IMR-90 (cell line): ENCODE measurements at regions of chr7 and their contacts with region 1.

Region 1: DNA sequence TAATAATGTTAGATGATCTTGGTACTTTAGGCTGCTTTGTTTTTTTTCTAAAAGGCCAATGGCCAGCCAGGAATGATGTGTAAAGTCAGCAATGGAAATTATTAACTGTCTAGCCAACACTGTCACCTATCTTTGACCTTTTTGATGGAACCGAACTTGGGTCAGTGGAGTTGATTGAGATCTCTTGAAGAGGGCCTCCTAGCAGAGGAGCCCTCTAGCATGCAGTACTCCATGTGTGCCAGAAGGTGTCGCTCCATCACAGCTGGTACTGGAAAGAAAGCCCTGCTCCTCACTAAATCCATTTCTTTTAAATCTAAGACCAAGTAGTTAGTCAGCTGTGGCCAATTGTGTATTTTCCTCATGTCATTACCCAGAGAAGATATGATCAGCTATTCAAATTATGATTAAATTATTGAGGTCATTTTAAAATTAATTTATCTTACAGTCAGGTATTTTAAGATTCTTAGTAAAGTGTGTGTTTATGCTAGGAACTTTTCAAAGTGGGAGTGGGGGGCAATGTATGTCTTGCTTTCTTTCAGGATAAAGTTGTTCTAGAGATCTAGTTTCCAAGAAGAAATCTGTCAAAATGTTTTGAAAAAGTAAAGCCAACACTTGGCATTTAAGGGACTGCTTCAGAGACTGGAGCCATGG is 33.1 kb upstream of the CROT start:
- DNase-seq: peak; percentile 71
- ATAC-seq: peak; percentile 85
- H3K4me3 ChIP-seq: no peak overlapping the region
- H3K27ac ChIP-seq: no peak overlapping the region
- H3K4me1 ChIP-seq: peaks cover 7% of the 10 kb centered on the region
- H3K27me3 ChIP-seq: no peaks in the 10 kb centered on the region
- CTCF ChIP-seq: peak; percentile 99
- POLR2A ChIP-seq: peak; percentile 30; the same call in 1 of the 2 replicates
- RAD21 ChIP-seq: peak; percentile 100

Region 2: DNA sequence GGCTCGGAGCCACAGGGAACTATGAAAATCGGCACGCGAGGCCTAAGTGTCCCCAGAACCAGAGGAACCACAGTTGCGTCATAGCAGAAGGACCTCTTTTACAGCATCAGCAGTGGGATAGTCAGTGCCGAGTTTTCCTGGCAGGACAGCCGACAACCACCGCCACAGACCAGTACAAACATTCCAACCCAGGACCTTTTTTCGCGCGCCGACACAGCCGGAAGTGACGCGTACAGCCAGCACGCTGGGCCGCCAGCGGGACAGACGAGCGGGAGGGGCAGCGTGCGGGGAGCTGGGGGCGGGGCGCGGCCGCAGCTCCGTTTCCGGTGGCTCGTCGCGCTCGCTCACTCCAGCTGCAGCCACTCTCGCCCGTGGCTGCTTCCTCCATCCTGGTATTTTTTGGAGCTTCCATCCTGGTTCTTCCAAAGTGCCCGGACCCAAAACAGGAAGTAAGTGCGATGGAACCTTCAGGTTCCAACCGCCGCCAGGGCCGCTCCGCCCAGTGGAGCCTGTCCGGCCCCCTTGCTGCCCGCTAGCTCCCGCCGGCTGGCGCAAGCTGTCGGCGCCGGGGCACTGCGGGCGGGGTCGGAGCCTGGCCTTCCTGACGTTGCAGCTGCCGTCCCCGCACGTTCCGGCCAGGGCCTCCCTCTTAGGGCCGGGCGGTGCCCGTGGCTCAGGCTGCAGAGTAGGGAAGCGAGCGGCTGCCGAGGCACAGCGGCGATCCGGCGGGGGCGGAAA is 160.1 kb before region 1 on chr7 and contains the start of gene DMTF1:
- CTCF ChIA-PET with region 1: no interaction called
- POLR2A ChIA-PET with region 1: no interaction called
- dilution Hi-C with region 1: no loop called
- in situ Hi-C with region 1: no loop called
- intact Hi-C with region 1: loop called (anchors 5 kb)
- DNase-seq: peak; percentile 93
- ATAC-seq: peak; percentile 88
- H3K4me3 ChIP-seq: peak within 1 kb of the TSS; percentile 81
- H3K27ac ChIP-seq: peak within 1 kb of the TSS; percentile 89
- H3K4me1 ChIP-seq: 0 out of 2 replicates have a peak, but pooled peaks cover 2% of the 10 kb centered on the region
- H3K27me3 ChIP-seq: no peaks in the 10 kb centered on the region
- CTCF ChIP-seq: 0 out of 2 replicates have a peak, but pooled peaks have one; percentile 6
- POLR2A ChIP-seq: peak; percentile 90
- RAD21 ChIP-seq: no peak
- total RNA-seq, gene DMTF1: 59.0 and 69.7 TPM in 2 replicates

Region 3: GRCh38 chr7:87398446-87398845 is 86.1 kb after region 1 on chr7:
- CTCF ChIA-PET with region 1: interaction called, 7 read pairs
- POLR2A ChIA-PET with region 1: no interaction called
- dilution Hi-C with region 1: no loop called
- in situ Hi-C with region 1: no loop called
- intact Hi-C with region 1: loop called (anchors 1 kb)
- DNase-seq: peak; percentile 79
- ATAC-seq: peak; percentile 86
- H3K4me3 ChIP-seq: no peak overlapping the region
- H3K27ac ChIP-seq: peak overlapping the region; percentile 46; the same call in 1 of the 2 replicates
- H3K4me1 ChIP-seq: peaks cover 9% of the 10 kb centered on the region
- H3K27me3 ChIP-seq: no peaks in the 10 kb centered on the region
- CTCF ChIP-seq: no peak
- POLR2A ChIP-seq: no peak
- RAD21 ChIP-seq: no peak

Region 4: DNA sequence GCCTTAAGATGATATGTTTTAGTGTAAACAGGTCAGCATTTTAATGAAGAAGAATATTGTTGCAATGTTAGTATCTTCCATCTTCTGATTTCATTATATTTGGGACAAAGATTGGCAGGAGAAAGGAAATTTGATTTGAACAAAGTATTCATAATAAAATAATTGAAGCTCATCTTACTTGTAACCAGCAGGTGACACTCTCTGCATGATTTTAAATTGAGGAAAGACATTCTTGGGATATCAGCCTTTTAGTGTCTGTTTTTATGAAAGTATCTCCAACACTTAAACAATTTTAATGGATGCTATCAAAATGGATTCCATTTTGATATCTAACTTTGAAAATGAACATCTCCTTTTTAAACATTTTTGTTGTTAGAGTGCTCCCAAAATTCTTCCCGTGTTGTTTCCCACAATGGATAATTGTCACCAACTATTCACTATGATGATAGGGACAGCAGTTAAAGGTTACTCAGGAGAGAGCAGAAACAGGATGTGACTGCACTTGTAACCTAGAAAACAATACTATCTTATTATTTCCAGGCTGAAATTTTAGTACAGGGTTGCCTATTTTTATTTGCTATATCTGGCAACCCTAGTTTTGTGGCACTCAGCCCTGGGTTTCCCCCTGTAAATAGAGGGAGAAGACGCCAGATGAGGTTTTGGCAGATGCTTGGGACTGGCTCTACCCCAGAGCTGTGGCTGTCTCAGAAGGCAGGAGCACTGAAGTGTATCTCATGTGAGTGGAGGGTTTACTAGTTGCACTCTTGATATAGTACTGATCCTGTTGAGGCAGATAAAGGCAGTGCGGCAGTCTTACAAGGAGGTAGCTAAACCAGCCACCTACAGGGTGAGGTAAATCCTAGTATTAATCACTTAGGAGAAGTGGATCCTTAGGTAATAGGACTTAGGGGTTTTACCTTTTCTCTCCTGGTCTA is 194.2 kb after region 1 on chr7:
- CTCF ChIA-PET with region 1: no interaction called
- POLR2A ChIA-PET with region 1: no interaction called
- dilution Hi-C with region 1: no loop called
- in situ Hi-C with region 1: no loop called
- intact Hi-C with region 1: loop called (anchors 2 kb)
- DNase-seq: peak; percentile 43
- ATAC-seq: peak; percentile 57; the same call in 1 of the 2 replicates
- H3K4me3 ChIP-seq: no peak overlapping the region
- H3K27ac ChIP-seq: no peak overlapping the region
- H3K4me1 ChIP-seq: peaks cover 3% of the 10 kb centered on the region; the same call in 1 of the 2 replicates
- H3K27me3 ChIP-seq: peaks cover 2% of the 10 kb centered on the region; the same call in 1 of the 2 replicates
- CTCF ChIP-seq: peak; percentile 70
- POLR2A ChIP-seq: no peak
- RAD21 ChIP-seq: peak; percentile 68

Region 5: DNA sequence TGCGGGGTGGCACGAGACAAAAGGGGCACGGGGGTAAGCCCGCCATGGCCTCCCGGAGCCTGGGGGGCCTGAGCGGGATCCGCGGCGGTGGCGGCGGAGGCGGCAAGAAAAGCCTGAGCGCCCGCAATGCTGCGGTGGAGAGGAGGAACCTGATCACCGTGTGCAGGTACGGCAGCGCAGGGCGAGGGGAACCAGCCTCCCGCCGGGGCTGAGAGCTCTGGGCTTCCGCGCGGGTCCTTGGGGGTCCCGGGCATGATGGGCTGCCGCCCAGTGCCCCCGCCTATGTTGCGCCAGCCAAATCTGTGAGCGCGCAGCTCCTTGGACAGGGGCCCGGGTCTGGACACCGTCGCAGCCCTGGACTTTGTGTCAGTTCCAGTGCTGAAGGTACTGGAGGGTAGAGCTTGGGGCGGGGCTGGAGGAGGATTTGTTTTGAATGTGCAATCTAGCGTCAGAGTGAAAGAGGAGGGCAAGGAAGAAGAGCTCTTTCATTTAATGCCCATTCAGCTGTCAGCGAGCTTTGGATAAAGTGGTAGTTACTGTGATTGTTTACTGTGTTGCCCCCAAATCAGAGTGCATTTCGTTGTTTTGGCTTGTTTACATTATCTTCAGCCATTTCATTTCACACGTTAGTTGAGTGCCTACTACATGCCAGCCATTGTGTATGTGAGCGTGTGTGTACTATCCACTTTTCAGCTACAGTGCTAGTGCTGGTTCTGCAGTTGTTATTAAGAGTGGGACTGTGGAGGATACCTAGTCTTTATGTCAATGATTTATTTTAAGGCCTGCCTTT is 316.6 kb after region 1 on chr7:
- CTCF ChIA-PET with region 1: no interaction called
- POLR2A ChIA-PET with region 1: no interaction called
- dilution Hi-C with region 1: no loop called
- in situ Hi-C with region 1: no loop called
- intact Hi-C with region 1: loop called (anchors 5 kb)
- DNase-seq: no peak
- ATAC-seq: no peak
- H3K4me3 ChIP-seq: peak overlapping the region; percentile 59
- H3K27ac ChIP-seq: no peak overlapping the region
- H3K4me1 ChIP-seq: no peaks in the 10 kb centered on the region; the same call in 1 of the 2 replicates
- H3K27me3 ChIP-seq: peaks cover 3% of the 10 kb centered on the region; the same call in 1 of the 2 replicates
- CTCF ChIP-seq: no peak
- POLR2A ChIP-seq: no peak
- RAD21 ChIP-seq: no peak

Region 6: GRCh38 chr7:87886875-87887274 is 574.5 kb after region 1 on chr7:
- CTCF ChIA-PET with region 1: no interaction called
- POLR2A ChIA-PET with region 1: no interaction called
- dilution Hi-C with region 1: no loop called
- in situ Hi-C with region 1: no loop called
- intact Hi-C with region 1: loop called (anchors 1 kb)
- DNase-seq: peak; percentile 56
- ATAC-seq: no peak; the same call in 1 of the 2 replicates
- H3K4me3 ChIP-seq: no peak overlapping the region
- H3K27ac ChIP-seq: no peak overlapping the region
- H3K4me1 ChIP-seq: no peaks in the 10 kb centered on the region
- H3K27me3 ChIP-seq: no peaks in the 10 kb centered on the region
- CTCF ChIP-seq: peak; percentile 59
- POLR2A ChIP-seq: no peak
- RAD21 ChIP-seq: peak; percentile 65